Lower leg skin (tissue), 4 donors: ENCODE measurements at regions of chr5 and their contacts with region 1.

Region 1: DNA sequence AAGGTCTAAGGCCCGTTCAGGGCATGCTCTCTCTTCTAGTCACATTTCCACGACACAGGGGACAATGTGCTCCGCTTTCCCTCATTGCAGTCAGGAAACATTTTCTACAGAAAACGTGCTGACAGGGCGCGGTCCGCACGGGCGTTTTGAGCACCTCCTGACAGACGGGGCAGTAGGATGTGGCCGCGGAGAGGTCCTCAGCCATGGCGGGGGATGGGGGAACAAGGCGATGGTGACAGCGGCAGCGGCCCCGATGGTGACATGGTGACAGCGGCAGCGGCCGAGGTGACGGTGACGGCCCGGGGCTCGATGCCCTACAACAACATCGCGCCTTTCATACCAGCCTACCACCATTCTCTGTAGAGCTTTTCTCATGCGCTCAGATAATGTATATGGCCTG is 4.1 kb downstream of the PLPP1 start:
- DNase-seq: no peak
- H3K4me3 ChIP-seq: no peak overlapping the region
- CTCF ChIP-seq: no peak
- POLR2A ChIP-seq: no peak

Region 2: DNA sequence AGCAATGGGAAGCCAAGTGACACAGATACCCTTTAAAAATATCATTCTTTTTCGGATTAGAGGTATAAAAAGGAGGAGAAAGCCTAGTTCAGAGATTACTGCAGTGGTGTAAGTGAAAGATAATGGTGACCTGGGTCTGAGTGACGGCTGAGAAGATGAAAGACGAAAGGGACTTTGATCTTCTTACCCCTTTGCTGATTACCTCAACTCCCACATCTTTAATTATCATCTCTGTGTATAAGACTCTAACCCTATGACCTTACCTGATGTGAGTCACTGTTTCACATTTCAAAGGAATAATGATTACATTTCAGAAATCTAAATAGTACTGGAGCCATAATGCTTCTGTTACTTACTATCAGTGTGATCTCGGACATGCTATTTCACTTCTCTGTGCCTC is 275.9 kb before region 1 on chr5:
- intact Hi-C with region 1: no loop called
- DNase-seq: no peak
- H3K4me3 ChIP-seq: no peak overlapping the region
- CTCF ChIP-seq: no peak
- POLR2A ChIP-seq: no peak

Region 3: GRCh38 chr5:55492449-55492848 is 38.2 kb before region 1 on chr5:
- intact Hi-C with region 1: loop called (anchors 2 kb)
- DNase-seq: no peak
- H3K4me3 ChIP-seq: no peak overlapping the region
- CTCF ChIP-seq: no peak
- POLR2A ChIP-seq: no peak